ENCODE measurements at regions of chr17 and their contacts with region 1.

Region 1: DNA sequence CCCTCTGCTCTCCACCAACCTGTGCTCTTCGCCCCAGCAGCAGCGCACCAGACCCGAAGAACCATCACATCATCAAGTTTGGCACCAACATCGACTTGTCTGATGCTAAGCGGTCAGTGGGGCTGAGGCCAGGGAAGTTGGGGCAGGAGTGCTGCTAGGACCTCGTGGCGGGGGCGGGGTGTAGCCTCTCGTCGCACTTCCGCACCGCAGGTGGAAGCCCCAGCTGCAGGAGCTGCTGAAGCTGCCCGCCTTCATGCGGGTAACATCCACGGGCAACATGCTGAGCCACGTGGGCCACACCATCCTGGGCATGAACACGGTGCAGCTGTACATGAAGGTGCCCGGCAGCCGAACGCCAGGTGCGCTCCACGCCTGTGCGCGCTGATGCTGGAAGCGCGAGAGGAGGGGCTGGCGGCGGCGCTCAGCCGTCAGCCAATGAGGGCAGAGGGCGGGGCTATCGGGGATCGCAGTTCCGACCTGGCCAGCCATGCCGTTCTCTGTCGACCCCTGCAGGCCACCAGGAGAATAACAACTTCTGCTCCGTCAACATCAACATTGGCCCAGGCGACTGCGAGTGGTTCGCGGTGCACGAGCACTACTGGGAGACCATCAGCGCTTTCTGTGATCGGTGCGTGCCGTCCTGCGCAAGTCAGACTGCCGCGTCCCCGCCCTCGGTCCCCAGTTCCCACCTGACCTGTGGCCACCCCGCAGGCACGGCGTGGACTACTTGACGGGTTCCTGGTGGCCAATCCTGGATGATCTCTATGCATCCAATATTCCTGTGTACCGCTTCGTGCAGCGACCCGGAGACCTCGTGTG is 3.2 kb upstream of the TMEM88 start:
- DNase-seq: peak; percentile 91
- ATAC-seq: peak; percentile 62 to 75 (median 70)
- H3K4me3 ChIP-seq: peak overlapping the region in 5 of 10 donors; percentile 5 to 42 (median 19)
- H3K27ac ChIP-seq: peak overlapping the region in 5 of 10 donors; percentile 4 to 49 (median 17)
- H3K4me1 ChIP-seq: peaks cover 3 to 49% (median 30%) of the 10 kb centered on the region in 9 donors
- H3K27me3 ChIP-seq: no peaks in the 10 kb centered on the region
- CTCF ChIP-seq: peak; percentile 96 to 99 (median 98)

Region 2: DNA sequence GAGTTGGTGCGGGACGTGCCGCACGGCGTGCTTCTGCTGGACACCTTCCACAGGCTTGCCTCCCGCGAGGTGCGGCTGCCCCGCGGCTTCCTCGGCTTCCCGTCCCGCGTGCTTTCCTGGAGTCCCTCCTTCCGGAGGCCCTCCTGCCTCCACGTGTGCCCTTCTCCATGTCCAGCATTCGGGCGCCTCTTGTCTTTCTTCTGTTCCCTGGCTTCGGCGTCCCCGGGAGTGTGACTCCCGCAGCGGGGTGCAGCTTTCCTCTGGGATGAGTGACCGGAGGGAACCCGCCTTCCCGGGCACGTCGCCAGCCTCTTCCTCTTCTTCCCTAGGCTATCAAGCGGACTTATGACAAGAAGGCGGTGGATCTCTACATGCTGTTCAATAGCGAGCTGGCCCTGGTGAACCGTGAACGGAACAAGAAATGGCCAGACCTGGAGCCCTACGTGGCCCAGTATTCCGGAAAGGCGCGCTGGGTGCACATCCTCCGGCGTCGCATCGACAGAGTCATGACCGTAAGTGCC is 111.1 kb before region 1 on chr17:
- intact Hi-C with region 1: loop called in 4 of 10 experiments (anchors 2 to 10 kb)
- DNase-seq: peak in 1 of 2 donors; percentile 27
- ATAC-seq: peak in 2 of 8 donors; percentile 13 to 43
- H3K4me3 ChIP-seq: peak overlapping the region in 6 of 10 donors; percentile 7 to 41 (median 22)
- H3K27ac ChIP-seq: no peak overlapping the region
- H3K4me1 ChIP-seq: peaks cover 0 to 15% (median 0%) of the 10 kb centered on the region in 9 donors
- H3K27me3 ChIP-seq: peaks cover 0 to 31% (median 14%) of the 10 kb centered on the region in 7 donors
- CTCF ChIP-seq: no peak

Region 3: DNA sequence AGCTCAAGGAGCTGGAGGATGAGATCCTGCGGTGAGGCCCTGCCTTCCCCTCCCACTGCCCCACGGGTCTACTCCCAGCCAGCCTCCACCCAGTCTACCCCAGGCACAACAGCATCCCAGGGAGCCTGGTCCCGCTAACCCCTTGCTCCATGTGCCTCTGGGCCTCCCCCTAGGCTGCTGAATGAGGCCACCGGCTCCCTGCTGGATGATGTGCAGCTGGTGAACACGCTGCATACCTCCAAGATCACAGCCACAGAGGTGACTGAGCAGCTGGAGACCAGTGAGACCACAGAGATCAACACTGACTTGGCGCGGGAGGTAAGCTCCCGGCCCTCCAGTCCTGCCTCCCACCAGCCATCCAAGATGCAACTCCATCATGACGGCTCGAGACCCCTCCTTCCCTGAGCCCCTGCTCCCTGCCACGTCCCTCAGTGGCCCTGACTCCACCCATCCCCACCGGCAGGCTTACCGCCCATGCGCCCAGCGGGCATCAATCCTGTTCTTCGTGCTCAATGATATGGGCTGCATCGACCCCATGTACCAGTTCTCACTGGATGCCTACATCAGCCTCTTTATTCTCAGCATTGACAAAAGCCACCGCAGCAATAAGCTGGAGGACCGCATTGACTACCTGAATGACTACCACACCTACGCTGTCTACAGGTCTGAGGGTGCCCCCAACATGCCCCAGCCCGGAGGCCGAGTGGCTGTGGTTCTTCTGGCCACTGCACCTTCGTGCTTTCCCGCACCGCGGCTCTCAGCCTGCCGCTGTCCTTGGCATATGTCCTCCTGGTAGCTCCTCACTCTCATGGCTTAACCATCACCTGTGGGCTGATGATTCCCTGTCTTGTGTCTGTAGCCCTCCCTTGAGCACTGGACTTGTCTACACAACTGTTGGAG is 32.7 kb before region 1 on chr17:
- intact Hi-C with region 1: loop called in 7 of 10 experiments (anchors 1 to 5 kb)
- DNase-seq: no peak
- ATAC-seq: peak in 1 of 8 donors; percentile 26
- H3K4me3 ChIP-seq: no peak overlapping the region
- H3K27ac ChIP-seq: no peak overlapping the region
- H3K4me1 ChIP-seq: no peaks in the 10 kb centered on the region
- H3K27me3 ChIP-seq: peaks cover 0 to 14% (median 0%) of the 10 kb centered on the region in 7 donors
- CTCF ChIP-seq: no peak